ENCODE measurements at regions of chr7 and their contacts with region 1.

Region 1: GRCh38 chr7:135645296-135645904 is 16.9 kb upstream of the STMP1 start:
- DNase-seq: no peak
- ATAC-seq: peak; percentile 83
- H3K4me3 ChIP-seq: no peak overlapping the region
- H3K27ac ChIP-seq: no peak overlapping the region
- H3K4me1 ChIP-seq: no peaks in the 10 kb centered on the region
- H3K27me3 ChIP-seq: no peaks in the 10 kb centered on the region
- CTCF ChIP-seq: peak; percentile 56 to 65 (median 62)
- EP300 ChIP-seq: no peak
- POLR2A ChIP-seq: no peak
- RAD21 ChIP-seq: peak; percentile 54

Region 2: DNA sequence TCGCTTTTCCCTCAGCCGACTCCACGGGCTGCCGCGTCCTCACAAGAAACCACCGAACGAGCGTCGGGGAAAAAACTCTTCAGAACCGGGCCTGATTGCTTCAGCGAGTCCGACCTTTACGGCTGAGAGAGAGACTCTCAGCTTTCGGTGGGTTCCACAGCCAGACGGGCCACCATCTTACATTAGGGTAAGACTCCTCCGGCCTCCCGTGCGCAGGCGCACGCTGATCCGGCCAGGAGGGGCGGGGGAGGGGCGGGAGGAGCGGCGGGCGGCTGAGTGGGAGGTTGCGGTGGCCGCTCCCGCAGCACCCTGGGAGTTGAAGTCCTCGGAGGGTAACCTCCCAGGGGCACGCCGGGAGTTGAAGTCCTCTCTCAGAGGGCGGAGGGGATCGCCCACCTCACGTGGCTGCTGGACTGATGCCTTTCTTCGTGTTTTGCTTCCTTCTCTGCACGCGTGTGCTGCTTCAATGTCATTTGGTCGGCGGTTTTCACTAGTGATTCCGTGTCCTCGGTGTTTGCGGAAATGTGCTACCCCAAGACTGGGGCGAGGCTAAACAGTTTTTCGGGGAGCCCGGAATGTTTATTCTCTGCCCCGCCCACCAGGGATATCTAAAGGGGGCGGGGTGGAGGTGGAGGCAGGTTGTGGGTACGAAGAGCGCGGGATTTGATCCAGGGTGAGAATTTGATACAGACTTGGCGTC is 135.3 kb before region 1 on chr7 and contains the start of gene CNOT4:
- CTCF ChIA-PET with region 1: interaction called, 15 read pairs
- POLR2A ChIA-PET with region 1: no interaction called
- RAD21 ChIA-PET with region 1: interaction called, 6 read pairs
- SMC1A ChIA-PET with region 1: interaction called, 13 read pairs
- in situ Hi-C with region 1: no loop called
- intact Hi-C with region 1: loop called (anchors 1 kb)
- DNase-seq: peak; percentile 82
- ATAC-seq: peak; percentile 93
- H3K4me3 ChIP-seq: peak within 1 kb of the TSS; percentile 94
- H3K27ac ChIP-seq: peak within 1 kb of the TSS; percentile 97
- H3K4me1 ChIP-seq: no peaks in the 10 kb centered on the region
- H3K27me3 ChIP-seq: no peaks in the 10 kb centered on the region
- CTCF ChIP-seq: no peak
- EP300 ChIP-seq: no peak
- POLR2A ChIP-seq: peak; percentile 89
- RAD21 ChIP-seq: no peak
- polyA plus RNA-seq, gene CNOT4: 11.3 to 29.6 TPM

Region 3: GRCh38 chr7:135620980-135621850 is 24.2 kb before region 1 on chr7:
- CTCF ChIA-PET with region 1: interaction called, 64 read pairs
- POLR2A ChIA-PET with region 1: no interaction called
- RAD21 ChIA-PET with region 1: interaction called, 3 read pairs
- SMC1A ChIA-PET with region 1: interaction called, 10 read pairs
- in situ Hi-C with region 1: no loop called
- intact Hi-C with region 1: no loop called
- DNase-seq: no peak
- ATAC-seq: peak; percentile 63
- H3K4me3 ChIP-seq: no peak overlapping the region
- H3K27ac ChIP-seq: no peak overlapping the region
- H3K4me1 ChIP-seq: no peaks in the 10 kb centered on the region
- H3K27me3 ChIP-seq: no peaks in the 10 kb centered on the region
- CTCF ChIP-seq: peak; percentile 58 to 78 (median 67)
- EP300 ChIP-seq: no peak
- POLR2A ChIP-seq: no peak
- RAD21 ChIP-seq: peak; percentile 43

Region 4: DNA sequence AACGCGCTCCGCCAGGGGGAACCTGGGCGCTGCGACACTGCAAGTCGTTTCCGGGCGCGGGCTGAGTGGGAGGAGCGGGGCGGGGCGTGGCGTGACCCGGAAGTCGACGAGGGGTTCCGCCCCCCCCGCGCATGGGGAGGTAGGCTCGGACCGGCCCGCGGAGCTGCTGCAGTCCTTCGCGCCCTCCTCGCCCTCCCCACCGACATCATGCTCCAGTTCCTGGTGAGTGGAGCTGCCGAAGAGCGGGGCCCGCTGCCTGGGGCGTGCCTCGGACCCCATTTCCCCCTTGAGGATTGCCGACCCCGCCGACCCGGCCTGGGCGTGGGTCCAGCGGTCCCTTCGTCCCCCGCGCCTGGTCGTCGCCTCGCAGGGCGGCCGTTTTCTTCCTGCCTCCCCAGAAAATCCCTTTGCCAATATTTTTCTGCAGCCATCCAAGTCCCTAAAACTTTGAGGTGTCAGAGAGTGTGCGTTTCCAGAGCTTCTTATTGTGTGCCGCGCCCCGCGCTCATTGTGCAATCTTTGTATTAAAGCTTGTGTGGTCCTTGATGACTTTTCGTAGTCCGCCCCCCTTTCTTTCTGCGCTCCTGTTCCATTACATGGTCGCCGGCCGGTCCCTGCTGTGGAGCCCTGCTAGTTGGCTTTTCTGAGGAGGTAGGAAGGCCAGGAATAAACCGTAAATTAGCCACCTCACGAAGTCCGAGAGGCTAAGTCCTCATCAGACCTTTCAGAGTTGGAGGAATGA is 17.1 kb after region 1 on chr7 and contains the start of gene STMP1:
- CTCF ChIA-PET with region 1: interaction called, 75 read pairs
- POLR2A ChIA-PET with region 1: interaction called, 3 read pairs
- RAD21 ChIA-PET with region 1: interaction called, 5 read pairs
- SMC1A ChIA-PET with region 1: interaction called, 11 read pairs
- in situ Hi-C with region 1: no loop called
- intact Hi-C with region 1: no loop called
- DNase-seq: peak; percentile 66
- ATAC-seq: peak; percentile 93
- H3K4me3 ChIP-seq: peak within 1 kb of the TSS; percentile 100
- H3K27ac ChIP-seq: peak within 1 kb of the TSS; percentile 68
- H3K4me1 ChIP-seq: peaks cover 2% of the 10 kb centered on the region; the same call in 1 of the 2 replicates
- H3K27me3 ChIP-seq: no peaks in the 10 kb centered on the region
- CTCF ChIP-seq: peak in 2 of 3 experiments; percentile 74 to 78; a peak in 4 of 6 replicates
- EP300 ChIP-seq: 0 out of 4 replicates have a peak, but pooled peaks of 1 of the 2 experiments have one; percentile 22
- POLR2A ChIP-seq: peak; percentile 97
- RAD21 ChIP-seq: peak; percentile 47
- polyA plus RNA-seq, gene STMP1: 63.3 to 79.9 TPM

Region 5: DNA sequence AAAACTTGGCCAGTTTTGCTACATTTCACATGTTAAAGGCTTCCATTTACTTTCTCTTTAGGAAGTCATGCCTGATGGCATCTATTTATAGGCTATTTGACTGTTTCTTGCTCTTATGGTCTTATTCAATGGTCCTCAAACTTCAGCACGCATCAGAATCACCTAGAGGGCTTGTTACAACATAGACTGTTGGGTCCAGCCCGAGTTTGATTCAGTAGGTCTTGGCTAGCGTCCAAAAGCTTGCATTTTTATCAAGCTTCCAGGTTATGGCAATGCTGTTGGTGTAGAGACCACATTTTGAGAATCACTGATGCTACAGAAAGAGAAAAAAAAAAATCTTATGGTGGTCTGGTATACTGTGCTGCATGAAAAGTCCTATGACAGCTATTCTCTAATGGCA is 279.8 kb after region 1 on chr7:
- CTCF ChIA-PET with region 1: no interaction called
- POLR2A ChIA-PET with region 1: no interaction called
- RAD21 ChIA-PET with region 1: no interaction called
- SMC1A ChIA-PET with region 1: no interaction called
- in situ Hi-C with region 1: no loop called
- intact Hi-C with region 1: no loop called
- DNase-seq: no peak
- ATAC-seq: no peak
- H3K4me3 ChIP-seq: no peak overlapping the region
- H3K27ac ChIP-seq: no peak overlapping the region
- H3K4me1 ChIP-seq: no peaks in the 10 kb centered on the region; the same call in 1 of the 2 replicates
- H3K27me3 ChIP-seq: no peaks in the 10 kb centered on the region
- CTCF ChIP-seq: no peak
- EP300 ChIP-seq: no peak
- POLR2A ChIP-seq: no peak
- RAD21 ChIP-seq: no peak